ENCODE measurements at regions of chrX and their contacts with region 1.

Region 1: DNA sequence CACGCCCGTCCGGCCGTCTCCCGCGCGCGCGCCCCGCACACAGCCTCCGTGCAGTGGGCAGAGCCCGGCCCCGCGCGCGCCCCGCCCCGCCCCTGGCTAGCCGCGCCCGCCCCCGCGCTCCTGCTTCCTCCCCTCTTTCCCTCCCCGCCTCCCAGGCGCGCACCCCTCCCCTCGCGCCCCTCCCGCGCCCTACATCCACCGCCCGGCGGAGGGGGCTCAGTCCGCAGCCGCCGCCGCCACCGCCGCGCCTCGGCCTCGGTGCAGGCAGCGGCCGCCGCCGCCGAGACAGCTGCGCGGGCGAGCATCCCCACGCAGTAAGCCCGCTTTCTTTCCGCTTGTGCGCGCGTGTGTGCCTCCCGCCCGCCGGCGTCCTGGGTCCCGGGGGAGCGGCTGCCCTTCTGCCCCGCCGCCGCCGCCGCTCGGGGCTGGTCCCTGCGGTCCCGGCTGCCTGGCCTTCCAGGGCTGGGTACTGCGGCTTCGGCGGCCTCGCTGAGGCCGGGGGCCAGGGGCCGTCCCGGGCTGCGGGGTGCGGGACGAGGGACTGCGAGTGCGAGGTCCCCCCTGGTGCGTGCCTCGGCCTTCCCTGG is at the start of gene FHL1:
- DNase-seq: peak in 1 of 2 donors; percentile 83
- H3K4me3 ChIP-seq: peak within 1 kb of the TSS; percentile 72 to 92
- H3K27ac ChIP-seq: peak within 1 kb of the TSS; percentile 94 to 97
- H3K4me1 ChIP-seq: no peaks in the 10 kb centered on the region
- H3K27me3 ChIP-seq: no peaks in the 10 kb centered on the region
- CTCF ChIP-seq: no peak
- total RNA-seq, gene FHL1: 850 TPM

Region 2: GRCh38 chrX:136055651-136056221 is 91.7 kb before region 1 on chrX:
- intact Hi-C with region 1: loop called (anchors 1 kb)
- DNase-seq: peak; percentile 13 to 88
- H3K4me3 ChIP-seq: peak overlapping the region; percentile 25
- H3K27ac ChIP-seq: peak overlapping the region; percentile 91 to 94
- H3K4me1 ChIP-seq: peaks cover 0 to 39% of the 10 kb centered on the region in 2 donors
- H3K27me3 ChIP-seq: no peaks in the 10 kb centered on the region
- CTCF ChIP-seq: no peak

Region 3: GRCh38 chrX:136121788-136122187 is 25.6 kb before region 1 on chrX:
- intact Hi-C with region 1: loop called (anchors 2 kb)
- DNase-seq: peak in 1 of 2 donors; percentile 68
- H3K4me3 ChIP-seq: no peak overlapping the region
- H3K27ac ChIP-seq: peak overlapping the region in 1 of 2 donors; percentile 45
- H3K4me1 ChIP-seq: peaks cover 0 to 6% of the 10 kb centered on the region in 2 donors
- H3K27me3 ChIP-seq: no peaks in the 10 kb centered on the region
- CTCF ChIP-seq: no peak